ENCODE measurements at regions of chr2 and their contacts with region 1.

Region 1: DNA sequence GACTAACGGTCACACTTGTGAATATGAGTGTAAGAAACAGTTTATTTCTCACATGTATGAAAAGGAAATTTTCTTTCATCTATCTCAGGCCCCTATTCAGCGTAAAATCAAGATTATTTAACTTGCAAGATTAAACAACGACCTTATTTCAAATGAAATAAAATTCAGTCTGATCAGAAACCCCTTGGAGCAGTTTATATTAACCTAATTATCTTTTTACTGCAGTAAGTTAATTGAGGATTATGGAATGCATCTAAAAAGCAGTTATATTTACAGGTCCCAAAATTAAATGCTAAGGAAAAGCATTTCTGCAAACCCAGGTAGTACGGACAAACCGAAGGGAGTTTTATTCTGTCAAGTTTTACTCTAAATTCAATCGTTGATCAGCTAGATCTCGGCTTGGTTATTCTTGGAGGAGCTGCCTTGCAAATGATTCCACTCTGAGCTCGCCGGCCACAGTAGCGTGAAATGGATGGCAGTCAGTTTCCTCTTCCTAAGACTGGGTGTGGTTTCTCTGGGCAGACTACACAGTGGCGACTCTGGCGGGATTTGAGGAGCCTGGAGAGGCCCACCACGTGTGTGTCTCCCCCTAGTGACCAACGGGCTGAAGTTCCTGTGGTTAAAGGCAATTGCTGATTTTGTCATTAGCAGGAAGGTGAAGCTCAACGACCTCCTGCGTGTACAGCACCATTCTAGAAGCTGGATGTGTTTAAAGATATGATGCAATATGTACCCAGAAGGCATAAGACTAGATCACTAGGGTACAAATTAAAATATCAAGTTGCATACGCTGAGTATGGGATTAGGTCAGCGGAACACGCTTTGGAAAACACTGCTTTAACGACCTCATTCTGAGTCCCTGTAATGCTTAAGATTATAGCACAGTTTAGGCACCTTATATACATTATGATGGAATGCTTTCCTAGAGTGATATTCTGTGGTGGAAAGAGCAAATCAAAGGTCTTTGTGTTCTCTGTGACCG is 36.4 kb downstream of the PRKRA start:
- H3K4me3 ChIP-seq: peak overlapping the region; percentile 67
- H3K27ac ChIP-seq: peak overlapping the region; percentile 88
- H3K4me1 ChIP-seq: no peaks in the 10 kb centered on the region
- CTCF ChIP-seq: peak; percentile 96

Region 2: GRCh38 chr2:178128836-178129630 is 285.5 kb before region 1 on chr2:
- CTCF ChIA-PET with region 1: interaction called, 19 read pairs
- POLR2A ChIA-PET with region 1: no interaction called
- H3K4me3 ChIP-seq: no peak overlapping the region
- H3K27ac ChIP-seq: no peak overlapping the region
- H3K4me1 ChIP-seq: no peaks in the 10 kb centered on the region
- CTCF ChIP-seq: no peak

Region 3: GRCh38 chr2:178397002-178397605 is 17.5 kb before region 1 on chr2:
- CTCF ChIA-PET with region 1: interaction called, 61 read pairs
- POLR2A ChIA-PET with region 1: interaction called, 8 read pairs
- H3K4me3 ChIP-seq: no peak overlapping the region
- H3K27ac ChIP-seq: no peak overlapping the region
- H3K4me1 ChIP-seq: no peaks in the 10 kb centered on the region
- CTCF ChIP-seq: peak; percentile 18; the same call in 1 of the 2 replicates

Region 4: DNA sequence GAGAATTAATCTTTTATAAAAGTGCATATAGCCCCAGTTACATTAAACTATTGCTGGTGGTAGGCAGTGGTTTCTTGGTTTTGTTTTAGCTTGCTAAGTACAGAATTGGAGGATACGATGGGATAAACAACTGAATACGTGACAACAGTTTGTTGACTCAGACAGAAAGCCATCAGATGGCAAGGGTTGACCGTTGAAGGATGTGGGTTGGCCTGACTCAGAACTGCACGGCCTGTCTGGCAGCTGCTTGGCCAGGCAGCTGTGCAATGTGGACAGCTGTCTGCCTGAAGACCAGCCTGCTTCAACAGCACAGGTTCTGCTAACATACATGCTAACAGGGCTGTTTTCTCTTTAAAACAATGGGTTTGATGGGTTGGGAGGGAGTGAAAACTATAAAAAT is 10.2 kb before region 1 on chr2:
- CTCF ChIA-PET with region 1: interaction called, 61 read pairs
- POLR2A ChIA-PET with region 1: interaction called, 7 read pairs
- H3K4me3 ChIP-seq: no peak overlapping the region
- H3K27ac ChIP-seq: no peak overlapping the region
- H3K4me1 ChIP-seq: no peaks in the 10 kb centered on the region
- CTCF ChIP-seq: no peak

Region 5: GRCh38 chr2:178450774-178451525 is 36.4 kb after region 1 on chr2 and contains the starts of genes PJVK and PRKRA:
- CTCF ChIA-PET with region 1: interaction called, 16 read pairs
- POLR2A ChIA-PET with region 1: interaction called, 33 read pairs
- H3K4me3 ChIP-seq: peak within 1 kb of the TSS; percentile 92
- H3K27ac ChIP-seq: peak within 1 kb of the TSS; percentile 83
- H3K4me1 ChIP-seq: 0 out of 2 replicates have a peak, but pooled peaks cover 9% of the 10 kb centered on the region
- CTCF ChIP-seq: peak; percentile 78

Measured in HEK293 (cell line).